ENCODE measurements at regions of chr14 and their contacts with region 1.

Region 1: GRCh38 chr14:104047761-104048160 is 37.7 kb upstream of the ASPG start:
- DNase-seq: no peak
- ATAC-seq: no peak
- H3K4me3 ChIP-seq: no peak overlapping the region
- H3K4me3 Mint-ChIP-seq: no peak overlapping the region
- H3K27ac ChIP-seq: no peak overlapping the region
- H3K27ac Mint-ChIP-seq: no peak overlapping the region
- H3K4me1 ChIP-seq: no peaks in the 10 kb centered on the region
- H3K4me1 Mint-ChIP-seq: no peaks in the 10 kb centered on the region
- H3K27me3 ChIP-seq: peaks cover 0 to 36% of the 10 kb centered on the region in 2 experiments
- H3K27me3 Mint-ChIP-seq: peaks cover 35 to 37% of the 10 kb centered on the region in 2 donors

Region 2: GRCh38 chr14:103649001-103649400 is 398.8 kb before region 1 on chr14:
- CTCF ChIA-PET with region 1: no interaction called
- POLR2A ChIA-PET with region 1: interaction called in 1 of 2 experiments, 12 read pairs
- DNase-seq: no peak
- ATAC-seq: no peak
- H3K4me3 ChIP-seq: no peak overlapping the region
- H3K4me3 Mint-ChIP-seq: no peak overlapping the region
- H3K27ac ChIP-seq: no peak overlapping the region
- H3K27ac Mint-ChIP-seq: no peak overlapping the region
- H3K4me1 ChIP-seq: peaks cover 0 to 14% of the 10 kb centered on the region in 2 experiments
- H3K4me1 Mint-ChIP-seq: peaks cover 33 to 47% (median 44%) of the 10 kb centered on the region in 3 donors
- H3K27me3 ChIP-seq: no peaks in the 10 kb centered on the region
- H3K27me3 Mint-ChIP-seq: no peaks in the 10 kb centered on the region

Measured in T-cell (primary cell).